Activated CD8-positive, alpha-beta T cell treated with anti-CD3 and anti-CD28 coated beads, Interleukin-2, amount 10 ng/mL, durations not matched to agents 7 days and 5 days (primary cell): ENCODE measurements at regions of chr7 and their contacts with region 1.

Region 1: DNA sequence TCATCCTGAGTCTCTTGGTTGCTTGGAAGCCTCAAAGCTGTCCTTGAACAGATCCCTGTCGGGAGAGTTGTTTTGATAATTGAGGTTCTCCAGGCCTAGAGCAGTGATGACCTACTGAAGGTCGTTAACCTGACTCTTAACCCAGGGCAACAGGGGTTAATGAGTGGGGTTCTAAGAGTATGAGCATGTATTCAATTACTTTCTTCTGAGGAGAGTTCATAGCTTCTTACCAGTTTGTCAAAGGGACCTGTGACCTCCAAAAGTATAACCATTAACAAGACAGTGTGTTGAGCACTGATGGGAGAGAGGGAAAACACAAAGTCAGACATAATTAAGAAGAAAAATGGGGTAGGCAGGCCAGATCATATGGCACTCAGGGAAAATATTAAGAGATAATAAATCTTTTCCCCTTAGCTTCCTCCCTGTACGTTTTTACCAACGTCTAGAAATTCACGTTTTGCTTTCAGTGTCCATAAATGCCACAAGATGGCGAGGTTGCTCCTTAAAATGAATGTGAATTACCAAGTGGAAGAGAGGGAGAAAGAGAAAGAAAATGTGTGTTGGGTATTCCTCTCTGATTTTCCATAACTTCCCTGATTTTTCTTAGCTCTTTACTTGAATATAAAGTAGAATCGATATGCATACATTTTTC is 97.6 kb downstream of the SUGCT start:
- DNase-seq: peak; percentile 40
- ATAC-seq: no peak
- H3K4me3 Mint-ChIP-seq: no peak overlapping the region
- H3K27ac Mint-ChIP-seq: no peak overlapping the region
- H3K4me1 Mint-ChIP-seq: peaks cover 6% of the 10 kb centered on the region
- H3K27me3 Mint-ChIP-seq: no peaks in the 10 kb centered on the region

Region 2: GRCh38 chr7:40348124-40348728 is 115.9 kb after region 1 on chr7:
- CTCF ChIA-PET with region 1: no interaction called
- POLR2A ChIA-PET with region 1: no interaction called
- DNase-seq: no peak
- ATAC-seq: no peak
- H3K4me3 Mint-ChIP-seq: no peak overlapping the region
- H3K27ac Mint-ChIP-seq: no peak overlapping the region
- H3K4me1 Mint-ChIP-seq: no peaks in the 10 kb centered on the region
- H3K27me3 Mint-ChIP-seq: no peaks in the 10 kb centered on the region

Region 3: GRCh38 chr7:40393660-40394059 is 161.3 kb after region 1 on chr7:
- CTCF ChIA-PET with region 1: no interaction called
- POLR2A ChIA-PET with region 1: no interaction called
- DNase-seq: no peak
- ATAC-seq: no peak
- H3K4me3 Mint-ChIP-seq: no peak overlapping the region
- H3K27ac Mint-ChIP-seq: no peak overlapping the region
- H3K4me1 Mint-ChIP-seq: no peaks in the 10 kb centered on the region
- H3K27me3 Mint-ChIP-seq: peaks cover 2% of the 10 kb centered on the region

Region 4: DNA sequence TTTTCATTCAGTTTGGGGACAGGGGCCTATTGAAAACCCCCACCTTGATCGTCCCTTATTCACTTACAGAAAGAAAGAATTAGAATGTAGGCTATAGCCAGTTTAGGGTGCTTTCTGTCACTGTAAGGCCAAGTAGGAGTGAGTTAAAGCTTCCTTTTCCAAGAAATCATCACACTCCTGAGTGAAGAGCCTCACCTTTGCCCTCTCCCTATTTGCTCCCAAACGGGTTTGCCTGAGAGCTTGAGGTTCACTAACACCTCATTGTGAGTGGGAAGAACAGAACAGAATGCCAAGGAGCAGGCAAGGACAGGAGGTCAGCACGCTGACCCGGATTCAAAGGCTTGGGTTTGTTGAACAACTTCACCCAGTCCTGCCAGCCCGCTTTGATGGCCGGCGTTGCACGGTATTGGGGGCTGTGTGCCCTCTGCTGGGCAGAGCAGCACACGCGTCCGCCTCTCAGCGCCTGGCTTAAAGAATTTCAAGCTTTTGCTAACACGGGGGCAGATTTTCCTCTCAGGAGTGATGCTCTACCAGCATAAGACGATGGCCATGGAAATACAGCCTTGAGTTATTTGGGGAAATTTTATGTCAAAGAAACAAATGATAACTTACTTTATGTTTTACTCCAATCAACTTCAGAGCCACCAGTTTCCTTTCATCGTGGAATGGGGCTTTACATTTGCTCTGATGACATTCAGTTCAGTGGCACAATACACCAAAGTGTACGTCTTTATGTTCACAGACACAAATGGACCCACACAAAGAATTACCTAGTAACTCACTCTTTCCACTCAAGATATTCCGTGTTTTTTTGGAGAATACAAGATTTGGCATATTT is 372.5 kb after region 1 on chr7:
- CTCF ChIA-PET with region 1: interaction called, 32 read pairs
- POLR2A ChIA-PET with region 1: no interaction called
- DNase-seq: peak; percentile 46
- ATAC-seq: peak; percentile 77
- H3K4me3 Mint-ChIP-seq: no peak overlapping the region
- H3K27ac Mint-ChIP-seq: no peak overlapping the region
- H3K4me1 Mint-ChIP-seq: peaks cover 11% of the 10 kb centered on the region
- H3K27me3 Mint-ChIP-seq: no peaks in the 10 kb centered on the region

Region 5: DNA sequence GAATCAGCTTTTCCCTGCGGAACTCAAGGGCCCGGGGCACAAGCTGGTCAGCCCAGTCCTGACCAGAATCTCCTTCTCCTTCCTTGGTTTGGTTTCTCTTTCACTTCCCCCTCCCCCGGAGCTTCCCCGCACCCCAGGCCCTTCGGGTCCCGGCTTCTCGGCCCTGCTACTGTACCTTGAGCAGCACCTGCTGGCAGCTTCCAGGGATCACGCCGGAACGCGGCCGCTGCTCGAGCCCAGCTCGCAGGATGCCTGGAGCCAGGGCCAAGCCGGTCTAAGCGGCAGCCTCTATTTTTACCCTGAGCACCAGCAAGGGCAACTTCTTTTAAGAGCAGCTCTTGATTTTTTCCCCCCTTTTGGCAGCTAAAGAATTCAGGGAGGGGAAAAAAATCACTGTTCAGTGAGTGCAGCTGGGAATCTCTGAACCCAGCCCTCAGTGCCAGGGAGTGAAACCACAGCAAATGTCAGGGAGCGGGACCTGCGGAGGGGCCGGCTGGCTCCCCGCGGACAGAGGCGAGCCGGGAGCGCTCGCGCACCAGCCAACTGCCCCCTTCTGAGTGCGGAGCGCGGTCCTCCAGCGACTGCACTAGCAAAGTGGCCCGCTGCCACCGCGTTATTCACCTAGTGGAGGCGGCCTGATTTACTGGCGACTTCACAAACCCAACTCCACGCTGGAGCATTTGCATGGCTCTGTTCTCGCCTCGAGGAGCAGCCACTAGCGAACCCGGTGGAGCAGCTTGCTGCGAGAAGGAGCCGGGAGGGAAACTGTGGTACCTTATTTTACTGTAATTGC is 1472.9 kb after region 1 on chr7:
- CTCF ChIA-PET with region 1: interaction called, 12 read pairs
- POLR2A ChIA-PET with region 1: no interaction called
- DNase-seq: peak; percentile 73
- ATAC-seq: peak; percentile 97
- H3K4me3 Mint-ChIP-seq: peak overlapping the region; percentile 71
- H3K27ac Mint-ChIP-seq: no peak overlapping the region
- H3K4me1 Mint-ChIP-seq: peaks cover 14% of the 10 kb centered on the region
- H3K27me3 Mint-ChIP-seq: peaks cover 50% of the 10 kb centered on the region